Esophagus muscularis mucosa (tissue), 4 donors: ENCODE measurements at regions of chr14 and their contacts with region 1.

Region 1: GRCh38 chr14:63641473-63642228 is at the start of gene WDR89:
- DNase-seq: peak; percentile 100
- H3K4me3 ChIP-seq: peak within 1 kb of the TSS; percentile 63 to 77 (median 68)
- H3K27ac ChIP-seq: peak within 1 kb of the TSS; percentile 89 to 93 (median 92)
- H3K4me1 ChIP-seq: peaks cover 5 to 17% (median 16%) of the 10 kb centered on the region in 4 donors
- H3K27me3 ChIP-seq: no peaks in the 10 kb centered on the region
- CTCF ChIP-seq: peak; percentile 67 to 88 (median 68)
- EP300 ChIP-seq: no peak
- POLR2A ChIP-seq: no peak
- total RNA-seq, gene WDR89: 4.5 to 9.6 (median 6.9) TPM

Region 2: GRCh38 chr14:63388763-63389431 is 252.8 kb before region 1 on chr14:
- intact Hi-C with region 1: loop called (anchors 5 kb)
- DNase-seq: no peak
- H3K4me3 ChIP-seq: no peak overlapping the region
- H3K27ac ChIP-seq: no peak overlapping the region
- H3K4me1 ChIP-seq: no peaks in the 10 kb centered on the region
- H3K27me3 ChIP-seq: no peaks in the 10 kb centered on the region
- CTCF ChIP-seq: peak; percentile 80 to 88 (median 86)
- EP300 ChIP-seq: no peak
- POLR2A ChIP-seq: no peak

Region 3: GRCh38 chr14:63513756-63514155 is 127.9 kb before region 1 on chr14:
- intact Hi-C with region 1: no loop called
- DNase-seq: no peak
- H3K4me3 ChIP-seq: no peak overlapping the region
- H3K27ac ChIP-seq: no peak overlapping the region
- H3K4me1 ChIP-seq: peaks cover 14 to 49% (median 38%) of the 10 kb centered on the region in 4 donors
- H3K27me3 ChIP-seq: no peaks in the 10 kb centered on the region
- CTCF ChIP-seq: no peak
- EP300 ChIP-seq: no peak
- POLR2A ChIP-seq: no peak

Region 4: GRCh38 chr14:63543000-63543825 is 98.4 kb before region 1 on chr14 and contains the start of gene PPP2R5E:
- intact Hi-C with region 1: loop called (anchors 5 kb)
- DNase-seq: peak; percentile 99
- H3K4me3 ChIP-seq: peak within 1 kb of the TSS; percentile 80 to 100 (median 85)
- H3K27ac ChIP-seq: peak within 1 kb of the TSS; percentile 87 to 96 (median 94)
- H3K4me1 ChIP-seq: peaks cover 22 to 35% (median 30%) of the 10 kb centered on the region in 4 donors
- H3K27me3 ChIP-seq: no peaks in the 10 kb centered on the region
- CTCF ChIP-seq: no peak
- EP300 ChIP-seq: no peak
- POLR2A ChIP-seq: peak; percentile 64
- total RNA-seq, gene PPP2R5E: 26.3 to 30.7 (median 30.2) TPM

Region 5: GRCh38 chr14:63727774-63728728 is 86.4 kb after region 1 on chr14 and contains the start of gene SGPP1:
- intact Hi-C with region 1: loop called (anchors 5 kb)
- DNase-seq: peak; percentile 94
- H3K4me3 ChIP-seq: peak within 1 kb of the TSS; percentile 91 to 96 (median 95)
- H3K27ac ChIP-seq: peak within 1 kb of the TSS; percentile 89 to 94 (median 91)
- H3K4me1 ChIP-seq: peaks cover 14 to 39% (median 30%) of the 10 kb centered on the region in 4 donors
- H3K27me3 ChIP-seq: no peaks in the 10 kb centered on the region
- CTCF ChIP-seq: peak; percentile 19 to 47 (median 42)
- EP300 ChIP-seq: no peak
- POLR2A ChIP-seq: peak; percentile 35
- total RNA-seq, gene SGPP1: 18.0 to 26.8 (median 19.3) TPM

Region 6: GRCh38 chr14:63760014-63760413 is 118.4 kb after region 1 on chr14:
- intact Hi-C with region 1: loop called (anchors 10 kb)
- DNase-seq: no peak
- H3K4me3 ChIP-seq: peak overlapping the region in 1 of 4 donors; percentile 25
- H3K27ac ChIP-seq: no peak overlapping the region
- H3K4me1 ChIP-seq: no peaks in the 10 kb centered on the region
- H3K27me3 ChIP-seq: no peaks in the 10 kb centered on the region
- CTCF ChIP-seq: no peak
- EP300 ChIP-seq: no peak
- POLR2A ChIP-seq: no peak